ENCODE measurements at regions of chr14 and their contacts with region 1.

Region 1: DNA sequence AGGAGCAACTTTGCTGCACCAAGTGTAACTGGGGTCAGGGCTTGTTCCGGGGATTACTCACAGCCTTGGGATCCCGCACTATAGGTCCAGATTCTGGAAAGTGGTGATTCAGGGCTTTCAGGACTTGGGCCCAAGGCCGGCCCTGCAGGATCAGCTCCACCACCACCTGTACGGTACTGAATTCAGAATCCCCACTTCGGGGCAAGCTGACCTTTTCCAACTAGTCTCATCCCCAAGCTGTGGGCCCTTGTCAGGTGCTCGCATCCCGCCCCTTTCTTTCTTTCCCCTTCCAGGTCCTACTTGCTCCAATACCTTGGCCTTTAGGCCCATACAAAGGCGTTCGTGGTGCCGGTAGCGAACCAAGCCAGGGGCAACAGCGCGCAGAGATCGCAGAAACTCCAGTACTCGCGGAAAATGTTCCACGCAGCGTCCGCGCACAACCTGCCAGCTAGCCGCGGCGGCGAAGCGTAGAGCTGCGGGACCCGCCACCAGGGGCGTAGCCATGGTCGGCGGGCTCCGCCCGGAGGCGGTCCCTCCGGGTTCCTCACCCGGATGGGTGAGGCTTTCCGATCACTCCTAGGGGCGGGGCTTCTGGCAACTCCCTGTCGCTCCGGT is 487 bp downstream of the TINF2 start:
- DNase-seq: no peak

Region 2: GRCh38 chr14:24299255-24300195 is 57.6 kb after region 1 on chr14 and contains the starts of genes DHRS1 and NOP9:
- in situ Hi-C with region 1: loop called (anchors 10 kb)
- DNase-seq: peak; percentile 95